A673 (cell line): ENCODE measurements at regions of chr15 and their contacts with region 1.

Region 1: GRCh38 chr15:75591655-75592364 is 12.7 kb upstream of the PTPN9 start:
- DNase-seq: no peak
- H3K4me3 ChIP-seq: no peak overlapping the region
- H3K27ac ChIP-seq: no peak overlapping the region
- H3K4me1 ChIP-seq: peaks cover under 1% of the 10 kb centered on the region
- H3K27me3 ChIP-seq: no peaks in the 10 kb centered on the region
- CTCF ChIP-seq: no peak

Region 2: GRCh38 chr15:73873889-73874511 is 1717.8 kb before region 1 on chr15:
- CTCF ChIA-PET with region 1: no interaction called
- POLR2A ChIA-PET with region 1: interaction called, 11 read pairs
- intact Hi-C with region 1: no loop called
- DNase-seq: peak; percentile 65
- H3K4me3 ChIP-seq: no peak overlapping the region
- H3K27ac ChIP-seq: no peak overlapping the region
- H3K4me1 ChIP-seq: no peaks in the 10 kb centered on the region
- H3K27me3 ChIP-seq: peaks cover 50% of the 10 kb centered on the region
- CTCF ChIP-seq: peak; percentile 76

Region 3: GRCh38 chr15:75532413-75533147 is 59.2 kb before region 1 on chr15:
- CTCF ChIA-PET with region 1: no interaction called
- POLR2A ChIA-PET with region 1: no interaction called
- intact Hi-C with region 1: no loop called
- DNase-seq: no peak
- H3K4me3 ChIP-seq: no peak overlapping the region
- H3K27ac ChIP-seq: no peak overlapping the region
- H3K4me1 ChIP-seq: peaks cover 11% of the 10 kb centered on the region
- H3K27me3 ChIP-seq: no peaks in the 10 kb centered on the region
- CTCF ChIP-seq: peak; percentile 19; the same call in 1 of the 2 replicates